ENCODE measurements at regions of chr5 and their contacts with region 1.

Region 1: DNA sequence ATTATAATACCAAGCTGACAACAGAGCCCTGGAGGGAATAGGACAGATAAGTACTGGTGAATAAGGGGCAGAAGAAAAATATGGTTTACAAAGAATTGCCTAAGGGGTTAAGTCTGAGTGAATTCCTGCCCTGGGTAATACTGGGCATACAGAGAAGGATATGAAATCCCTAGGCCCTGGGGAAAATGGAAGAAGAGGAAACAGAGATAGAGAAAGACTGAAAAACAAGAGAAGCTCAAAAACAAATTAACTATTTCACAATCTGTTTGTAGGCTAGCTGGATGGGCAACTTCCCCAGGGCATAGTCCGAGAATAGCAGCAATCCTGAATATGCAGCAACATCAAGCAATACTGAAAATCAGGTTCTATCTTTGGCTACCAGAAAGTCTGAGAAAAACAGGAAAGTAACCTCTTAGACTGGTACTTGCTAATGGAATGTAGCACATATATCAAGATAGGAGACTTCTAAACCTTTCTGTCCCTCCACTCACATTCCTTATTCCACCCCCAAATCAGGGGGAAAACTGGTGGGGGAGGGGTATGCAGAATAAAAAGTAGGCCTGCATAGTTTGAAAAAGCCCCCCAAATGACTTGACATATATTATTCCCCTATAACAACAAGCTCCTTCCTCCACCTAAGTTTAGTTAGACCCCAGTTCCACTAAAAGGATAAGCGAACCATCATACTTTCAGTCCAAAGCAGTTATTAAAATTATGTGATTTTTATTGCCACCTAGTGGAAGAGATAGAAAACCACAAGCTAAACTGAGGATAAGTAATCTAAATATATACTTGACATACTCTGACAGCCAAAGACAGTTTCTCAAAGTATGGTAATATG is 20.6 kb downstream of the SLC38A9 start:
- DNase-seq: no peak
- H3K4me3 ChIP-seq: no peak overlapping the region
- H3K27ac ChIP-seq: peak overlapping the region; percentile 36
- H3K4me1 ChIP-seq: peaks cover 16% of the 10 kb centered on the region
- H3K27me3 ChIP-seq: no peaks in the 10 kb centered on the region
- CTCF ChIP-seq: peak; percentile 59 to 76 (median 65)
- POLR2A ChIP-seq: no peak

Region 2: GRCh38 chr5:55344392-55344992 is 347.0 kb before region 1 on chr5:
- intact Hi-C with region 1: loop called (anchors 10 kb)
- DNase-seq: no peak
- H3K4me3 ChIP-seq: no peak overlapping the region
- H3K27ac ChIP-seq: peak overlapping the region; percentile 6
- H3K4me1 ChIP-seq: no peaks in the 10 kb centered on the region
- H3K27me3 ChIP-seq: no peaks in the 10 kb centered on the region
- CTCF ChIP-seq: peak; percentile 60 to 76 (median 70)
- POLR2A ChIP-seq: no peak

Region 3: DNA sequence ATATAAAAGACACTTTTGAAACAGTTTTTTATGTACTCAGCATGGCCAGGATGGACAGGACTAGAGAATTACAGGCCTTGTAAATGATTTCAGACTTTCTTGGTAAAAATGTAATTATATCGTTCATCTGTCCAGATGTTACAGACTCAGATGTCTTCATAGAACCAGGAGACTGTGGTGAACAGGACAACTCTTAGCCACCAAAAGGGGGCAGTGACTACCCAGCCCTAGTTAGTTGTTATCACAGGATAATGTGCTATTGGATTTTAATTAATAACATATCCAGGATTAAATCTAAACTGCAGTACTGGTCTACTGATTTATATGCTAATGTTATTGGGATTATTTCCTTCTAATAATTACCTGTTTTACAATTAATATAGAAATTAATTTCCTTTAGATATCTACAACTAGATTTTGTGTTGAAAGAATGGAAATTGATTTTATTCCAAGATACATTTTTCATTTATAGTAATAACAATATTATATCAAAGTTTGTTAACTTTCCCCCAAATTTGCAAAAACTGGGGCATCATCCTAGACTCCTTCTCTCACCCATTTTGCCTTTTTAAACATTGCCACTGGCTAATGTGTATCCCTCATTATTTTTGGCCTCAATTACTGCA is 284.3 kb before region 1 on chr5:
- intact Hi-C with region 1: loop called (anchors 5 kb)
- DNase-seq: no peak
- H3K4me3 ChIP-seq: no peak overlapping the region
- H3K27ac ChIP-seq: no peak overlapping the region
- H3K4me1 ChIP-seq: peaks cover 5% of the 10 kb centered on the region
- H3K27me3 ChIP-seq: no peaks in the 10 kb centered on the region
- CTCF ChIP-seq: peak in 2 of 3 experiments; percentile 14 to 60
- POLR2A ChIP-seq: no peak